ENCODE measurements at regions of chr13 and their contacts with region 1.

Region 1: GRCh38 chr13:77298426-77298825 is 28.5 kb downstream of the MYCBP2 start:
- DNase-seq: no peak
- H3K4me3 ChIP-seq: peak overlapping the region in 1 of 8 donors; percentile 38
- H3K27ac ChIP-seq: peak overlapping the region in 6 of 8 donors; percentile 13 to 59 (median 32)
- H3K4me1 ChIP-seq: peaks cover 25 to 89% (median 63%) of the 10 kb centered on the region in 6 donors
- H3K27me3 ChIP-seq: no peaks in the 10 kb centered on the region
- CTCF ChIP-seq: no peak
- POLR2A ChIP-seq: no peak

Region 2: DNA sequence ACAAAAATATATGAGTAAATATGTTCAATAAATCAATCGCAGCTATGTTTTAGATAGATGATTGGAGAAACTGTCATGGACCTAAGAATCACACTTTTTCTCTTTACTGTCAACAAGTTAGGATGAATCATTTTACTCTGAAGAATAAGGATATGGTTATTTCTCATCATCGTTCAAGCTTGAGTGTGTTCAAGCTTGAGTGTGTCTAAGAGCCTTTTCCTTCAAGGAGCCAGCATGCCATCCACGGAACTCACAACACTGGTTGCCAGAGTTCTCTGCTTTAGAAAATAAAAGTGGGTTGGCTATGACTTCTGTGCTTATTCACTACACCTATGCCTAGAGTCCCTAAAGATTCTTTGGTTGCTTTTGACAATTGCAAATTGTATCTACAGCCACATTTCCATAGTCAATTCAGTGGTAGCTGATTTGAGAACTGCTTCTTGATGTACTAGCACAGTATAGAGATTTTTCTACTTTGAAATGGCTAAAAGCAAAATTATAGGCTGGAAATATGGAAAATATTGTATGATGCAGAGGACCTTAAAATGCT is 178.9 kb after region 1 on chr13:
- intact Hi-C with region 1: loop called (anchors 10 kb)
- DNase-seq: no peak
- H3K4me3 ChIP-seq: peak overlapping the region in 1 of 8 donors; percentile 70
- H3K27ac ChIP-seq: peak overlapping the region in 1 of 8 donors; percentile 77
- H3K4me1 ChIP-seq: peaks cover 0 to 19% (median 10%) of the 10 kb centered on the region in 6 donors
- H3K27me3 ChIP-seq: no peaks in the 10 kb centered on the region
- CTCF ChIP-seq: no peak
- POLR2A ChIP-seq: no peak